K562 (cell line): ENCODE measurements at regions of chr2 and their contacts with region 1.

Region 1: DNA sequence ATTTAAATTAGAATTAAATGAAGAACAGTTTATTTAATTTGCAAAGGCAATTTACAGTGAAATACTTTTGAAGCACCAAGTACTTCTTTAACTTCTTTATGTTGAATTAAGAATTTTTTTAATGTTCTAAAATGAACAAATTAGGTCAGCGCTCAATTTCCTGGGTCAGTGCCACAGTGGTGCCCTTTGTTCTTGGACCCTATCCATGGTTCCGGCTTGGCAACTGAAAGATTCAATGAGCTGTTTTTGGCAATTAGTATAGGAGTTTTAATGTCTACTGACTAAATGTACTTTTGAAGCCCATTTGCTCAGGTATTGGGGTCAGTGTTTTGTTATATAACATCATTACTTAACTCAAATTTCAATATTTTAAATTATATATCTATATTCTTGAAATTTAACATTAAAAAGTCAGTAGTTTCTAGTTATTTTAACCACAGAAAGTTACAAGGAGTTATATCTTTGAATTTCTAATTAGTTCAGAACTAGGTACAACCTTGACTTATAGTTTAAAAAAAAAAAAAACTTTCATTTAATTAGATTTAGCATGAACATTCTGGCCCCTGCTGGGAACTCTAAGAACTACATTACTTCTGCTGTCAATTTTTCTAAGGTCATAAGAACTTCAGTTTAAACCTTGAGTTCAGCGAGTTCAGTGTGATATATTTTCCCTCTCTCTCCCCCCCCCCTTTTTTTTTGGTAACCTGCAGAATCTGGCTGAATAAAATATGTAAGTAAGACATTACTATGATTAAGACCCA is 7.6 kb upstream of the MSTN start:
- DNase-seq: peak; percentile 9 to 58 (median 14)
- ATAC-seq: peak; percentile 54; the same call in 1 of the 3 replicates
- H3K4me3 ChIP-seq: no peak overlapping the region
- H3K27ac ChIP-seq: no peak overlapping the region
- H3K4me1 ChIP-seq: no peaks in the 10 kb centered on the region
- H3K27me3 ChIP-seq: no peaks in the 10 kb centered on the region
- CTCF ChIP-seq: peak; percentile 39 to 67 (median 55); a peak in 3 of 6 replicates
- EP300 ChIP-seq: no peak
- POLR2A ChIP-seq: no peak
- RAD21 ChIP-seq: peak; percentile 50 to 72

Region 2: GRCh38 chr2:189498205-189498604 is 571.9 kb before region 1 on chr2:
- CTCF ChIA-PET with region 1: no interaction called
- POLR2A ChIA-PET with region 1: no interaction called
- in situ Hi-C with region 1: loop called (anchors 25 kb)
- intact Hi-C with region 1: no loop called
- DNase-seq: no peak
- ATAC-seq: peak; percentile 77
- H3K4me3 ChIP-seq: no peak overlapping the region
- H3K27ac ChIP-seq: no peak overlapping the region
- H3K4me1 ChIP-seq: no peaks in the 10 kb centered on the region
- H3K27me3 ChIP-seq: no peaks in the 10 kb centered on the region
- CTCF ChIP-seq: peak; percentile 9 to 41 (median 29); a peak in 4 of 6 replicates
- EP300 ChIP-seq: no peak
- POLR2A ChIP-seq: no peak
- RAD21 ChIP-seq: peak in 1 of 2 experiments; percentile 54; a peak in 3 of 4 replicates

Region 3: GRCh38 chr2:189661148-189661956 is 408.8 kb before region 1 on chr2 and contains the start of gene ASNSD1:
- CTCF ChIA-PET with region 1: interaction called, 15 read pairs
- POLR2A ChIA-PET with region 1: no interaction called
- in situ Hi-C with region 1: no loop called
- intact Hi-C with region 1: loop called (anchors 1 kb)
- DNase-seq: peak; percentile 96 to 98 (median 98)
- ATAC-seq: peak; percentile 96
- H3K4me3 ChIP-seq: peak within 1 kb of the TSS; percentile 78
- H3K27ac ChIP-seq: peak within 1 kb of the TSS; percentile 88
- H3K4me1 ChIP-seq: no peaks in the 10 kb centered on the region; a peak in 1 of 5 replicates
- H3K27me3 ChIP-seq: no peaks in the 10 kb centered on the region
- CTCF ChIP-seq: peak; percentile 93 to 99 (median 98)
- EP300 ChIP-seq: peak; percentile 27; the same call in 1 of the 2 replicates
- POLR2A ChIP-seq: peak; percentile 92
- RAD21 ChIP-seq: peak; percentile 92 to 97
- polyA plus RNA-seq, gene ASNSD1: 38.3 to 56.4 TPM

Region 4: GRCh38 chr2:189751080-189751658 is 318.9 kb before region 1 on chr2:
- CTCF ChIA-PET with region 1: interaction called, 10 read pairs
- POLR2A ChIA-PET with region 1: no interaction called
- in situ Hi-C with region 1: no loop called
- intact Hi-C with region 1: loop called (anchors 5 kb)
- DNase-seq: peak; percentile 14 to 55 (median 29)
- ATAC-seq: peak; percentile 87
- H3K4me3 ChIP-seq: no peak overlapping the region
- H3K27ac ChIP-seq: no peak overlapping the region
- H3K4me1 ChIP-seq: peaks cover 0 to 2% of the 10 kb centered on the region in 2 experiments; a peak in 2 of 5 replicates
- H3K27me3 ChIP-seq: no peaks in the 10 kb centered on the region
- CTCF ChIP-seq: peak; percentile 56 to 64 (median 59)
- EP300 ChIP-seq: no peak
- POLR2A ChIP-seq: no peak
- RAD21 ChIP-seq: peak; percentile 16 to 59; a peak in 3 of 4 replicates

Region 5: DNA sequence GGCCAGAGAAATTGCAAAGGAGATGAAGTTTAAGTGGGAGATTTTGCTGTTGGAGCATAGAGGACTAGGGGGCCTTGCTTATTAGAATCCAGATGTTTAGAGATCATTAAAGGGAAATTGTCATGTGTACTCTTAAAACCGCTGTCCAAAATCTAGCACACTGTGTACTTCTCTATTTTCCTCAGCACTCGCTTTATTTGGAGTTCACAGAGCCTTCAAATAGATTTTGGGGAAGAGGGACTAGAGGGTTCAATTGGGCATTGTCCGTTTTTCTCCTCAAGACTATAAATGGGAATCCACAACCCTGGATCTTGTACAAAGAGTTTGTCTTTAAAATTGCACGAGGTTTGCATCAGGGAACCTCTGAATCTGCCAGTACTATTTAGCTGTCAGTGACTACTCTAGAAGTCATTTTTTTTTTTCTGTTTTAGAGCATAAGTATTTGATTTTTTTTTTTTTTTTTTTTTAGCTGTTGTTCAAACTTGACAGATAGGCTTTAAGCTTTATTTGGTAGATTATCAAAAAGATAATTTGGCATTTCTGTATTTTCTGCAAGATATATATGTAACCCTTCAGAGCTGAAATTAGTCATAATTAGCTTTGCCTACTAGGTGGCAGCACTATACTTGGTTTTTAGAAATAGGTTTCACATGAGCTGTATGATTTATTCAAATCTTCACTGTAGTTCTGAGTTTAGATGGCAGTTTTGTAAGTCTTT is 271.6 kb before region 1 on chr2:
- CTCF ChIA-PET with region 1: interaction called, 9 read pairs
- POLR2A ChIA-PET with region 1: no interaction called
- in situ Hi-C with region 1: no loop called
- intact Hi-C with region 1: loop called (anchors 5 kb)
- DNase-seq: no peak
- ATAC-seq: peak; percentile 74
- H3K4me3 ChIP-seq: no peak overlapping the region
- H3K27ac ChIP-seq: no peak overlapping the region
- H3K4me1 ChIP-seq: no peaks in the 10 kb centered on the region
- H3K27me3 ChIP-seq: no peaks in the 10 kb centered on the region
- CTCF ChIP-seq: peak; percentile 8 to 45 (median 26); a peak in 3 of 6 replicates
- EP300 ChIP-seq: no peak
- POLR2A ChIP-seq: no peak
- RAD21 ChIP-seq: peak; percentile 18 to 49; a peak in 3 of 4 replicates

Region 6: DNA sequence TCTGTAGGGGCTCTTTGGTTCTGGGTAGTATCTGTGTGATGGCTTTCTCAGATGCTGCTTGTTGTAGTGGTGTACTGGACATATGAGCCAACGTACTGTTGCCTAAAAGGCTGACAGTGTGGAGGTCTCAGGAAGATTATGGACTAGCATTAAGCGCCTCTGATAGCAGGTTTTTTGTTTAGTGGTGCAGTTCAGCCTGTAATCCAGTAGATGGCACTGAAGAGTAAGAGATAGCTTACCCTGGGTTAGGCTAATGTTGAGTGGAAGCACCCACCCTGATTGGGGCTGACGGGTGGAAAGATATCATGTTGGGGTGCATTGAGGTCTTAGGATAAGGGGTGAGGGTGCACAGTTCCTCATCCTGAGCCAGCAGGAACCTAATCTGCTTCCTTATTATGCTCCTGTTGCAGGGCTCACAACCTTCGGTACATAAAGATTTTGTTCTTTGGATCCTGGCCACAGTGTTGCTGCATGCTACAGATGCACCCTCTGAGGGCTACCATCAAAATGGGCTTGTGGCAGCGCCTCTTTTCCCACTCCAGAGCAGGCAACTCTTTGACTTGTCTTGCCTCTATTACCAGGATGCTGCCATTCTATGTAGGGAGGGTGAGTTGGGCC is 87.2 kb before region 1 on chr2:
- CTCF ChIA-PET with region 1: no interaction called
- POLR2A ChIA-PET with region 1: no interaction called
- in situ Hi-C with region 1: no loop called
- intact Hi-C with region 1: loop called (anchors 2 kb)
- DNase-seq: peak; percentile 23 to 39 (median 26)
- ATAC-seq: peak; percentile 72
- H3K4me3 ChIP-seq: no peak overlapping the region
- H3K27ac ChIP-seq: no peak overlapping the region
- H3K4me1 ChIP-seq: no peaks in the 10 kb centered on the region
- H3K27me3 ChIP-seq: no peaks in the 10 kb centered on the region
- CTCF ChIP-seq: peak; percentile 46 to 52 (median 48); a peak in 5 of 6 replicates
- EP300 ChIP-seq: no peak
- POLR2A ChIP-seq: no peak
- RAD21 ChIP-seq: peak in 1 of 2 experiments; percentile 53; a peak in 2 of 4 replicates

Region 7: DNA sequence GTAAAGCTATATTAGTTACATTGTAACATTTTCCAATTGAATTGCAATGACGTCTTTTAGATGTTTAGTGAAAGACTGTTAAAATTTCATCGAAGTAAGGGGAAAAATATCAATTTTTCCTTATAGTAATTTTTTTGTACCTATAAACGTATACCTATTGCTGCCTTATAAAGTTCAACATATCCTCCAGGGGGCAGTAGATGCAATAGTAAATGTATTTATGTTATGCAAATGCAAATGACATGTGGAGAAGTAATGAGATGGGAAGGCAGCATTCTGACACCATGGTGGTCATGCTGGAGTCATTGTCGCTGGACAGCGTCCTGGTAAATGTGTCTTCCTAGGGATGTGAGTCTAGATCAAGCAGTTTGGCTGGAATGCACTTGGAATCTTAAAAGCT is 46.3 kb before region 1 on chr2:
- CTCF ChIA-PET with region 1: interaction called, 3 read pairs
- POLR2A ChIA-PET with region 1: no interaction called
- in situ Hi-C with region 1: no loop called
- intact Hi-C with region 1: loop called (anchors 1 kb)
- DNase-seq: peak; percentile 6 to 70 (median 16)
- ATAC-seq: peak; percentile 88
- H3K4me3 ChIP-seq: no peak overlapping the region
- H3K27ac ChIP-seq: no peak overlapping the region
- H3K4me1 ChIP-seq: no peaks in the 10 kb centered on the region
- H3K27me3 ChIP-seq: no peaks in the 10 kb centered on the region
- CTCF ChIP-seq: peak; percentile 35 to 60 (median 35); a peak in 4 of 6 replicates
- EP300 ChIP-seq: no peak
- POLR2A ChIP-seq: no peak
- RAD21 ChIP-seq: peak; percentile 31 to 50

Region 8: GRCh38 chr2:190050003-190050402 is 20.1 kb before region 1 on chr2:
- CTCF ChIA-PET with region 1: no interaction called
- POLR2A ChIA-PET with region 1: no interaction called
- in situ Hi-C with region 1: no loop called
- intact Hi-C with region 1: no loop called
- DNase-seq: no peak
- ATAC-seq: 0 out of 3 replicates have a peak, but pooled peaks have one; percentile 41
- H3K4me3 ChIP-seq: no peak overlapping the region
- H3K27ac ChIP-seq: no peak overlapping the region
- H3K4me1 ChIP-seq: peaks cover 0 to under 1% of the 10 kb centered on the region in 2 experiments; a peak in 2 of 5 replicates
- H3K27me3 ChIP-seq: no peaks in the 10 kb centered on the region
- CTCF ChIP-seq: no peak
- EP300 ChIP-seq: no peak
- POLR2A ChIP-seq: no peak
- RAD21 ChIP-seq: no peak